ENCODE measurements at regions of chr11 and their contacts with region 1.

Region 1: GRCh38 chr11:7442588-7443215 is 42.6 kb upstream of the OLFML1 start:
- DNase-seq: peak; percentile 63
- H3K4me3 ChIP-seq: no peak overlapping the region
- H3K27ac ChIP-seq: no peak overlapping the region
- H3K4me1 ChIP-seq: no peaks in the 10 kb centered on the region
- H3K27me3 ChIP-seq: peaks cover 2 to 11% of the 10 kb centered on the region in 2 experiments
- CTCF ChIP-seq: peak; percentile 78 to 80
- POLR2A ChIP-seq: no peak

Region 2: DNA sequence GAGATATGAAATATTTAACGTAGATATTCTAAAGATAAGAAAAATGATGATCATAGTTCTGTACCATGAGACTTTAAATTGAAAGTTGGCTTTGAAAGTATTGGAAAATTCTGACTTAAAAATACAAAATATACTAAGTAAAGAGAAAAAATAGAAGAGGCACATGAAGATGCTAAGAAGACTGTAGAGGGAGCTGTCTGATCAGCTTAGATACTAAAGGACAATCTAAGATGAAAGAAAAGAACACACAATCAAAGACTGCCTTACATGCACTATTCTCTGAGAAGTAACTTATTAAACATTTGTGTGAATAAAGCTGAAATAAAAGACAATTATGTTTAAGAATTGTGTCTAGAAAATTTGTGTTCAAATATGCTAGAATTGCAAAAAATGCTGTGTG is 298.8 kb before region 1 on chr11:
- CTCF ChIA-PET with region 1: interaction called, 15 read pairs
- POLR2A ChIA-PET with region 1: no interaction called
- dilution Hi-C with region 1: no loop called
- intact Hi-C with region 1: loop called (anchors 1 kb)
- DNase-seq: peak; percentile 22
- H3K4me3 ChIP-seq: no peak overlapping the region
- H3K27ac ChIP-seq: no peak overlapping the region
- H3K4me1 ChIP-seq: no peaks in the 10 kb centered on the region
- H3K27me3 ChIP-seq: no peaks in the 10 kb centered on the region
- CTCF ChIP-seq: peak in 1 of 2 donors; percentile 14
- POLR2A ChIP-seq: no peak

Region 3: DNA sequence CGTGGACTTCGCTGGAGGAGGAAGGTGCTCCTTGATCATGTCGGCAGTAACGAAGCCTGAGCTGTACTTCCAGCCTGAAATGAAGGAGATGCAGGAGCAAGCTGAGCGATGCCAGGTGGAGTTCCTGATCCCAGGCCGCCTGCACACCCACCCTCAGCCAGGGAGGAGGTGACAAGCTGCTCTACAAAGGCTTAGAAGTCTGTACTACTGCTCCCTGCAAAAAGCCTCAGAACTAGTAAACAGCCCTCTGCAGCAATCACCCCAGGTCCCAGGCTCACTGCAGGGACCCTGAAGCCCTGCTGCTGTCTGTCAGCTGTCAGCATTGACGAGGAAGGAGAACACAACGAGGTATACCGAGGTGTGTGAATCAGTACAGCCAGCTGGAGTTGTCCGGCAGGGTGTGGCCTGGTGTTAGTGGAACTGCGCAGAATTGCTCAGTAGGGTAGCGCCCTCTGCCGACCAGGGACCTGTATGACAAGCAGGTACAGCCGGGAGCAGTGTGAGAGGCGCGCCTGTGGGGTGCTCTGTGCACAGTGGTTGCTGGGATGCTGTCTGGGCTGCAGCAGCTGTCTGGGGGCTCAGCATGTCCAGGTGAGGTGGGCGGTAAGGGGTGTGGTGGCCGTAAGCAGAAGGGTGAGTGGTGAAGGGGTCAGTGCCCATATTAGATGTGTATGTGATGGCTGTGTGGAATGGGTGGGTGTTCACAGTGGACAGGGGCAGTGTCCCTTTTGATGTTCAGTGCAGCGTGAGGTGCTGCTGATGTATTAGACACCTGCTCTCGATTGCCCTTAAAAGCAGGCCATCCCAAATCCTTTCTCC is 223.0 kb after region 1 on chr11:
- CTCF ChIA-PET with region 1: interaction called, 17 read pairs
- POLR2A ChIA-PET with region 1: no interaction called
- dilution Hi-C with region 1: no loop called
- intact Hi-C with region 1: loop called (anchors 1 kb)
- DNase-seq: peak; percentile 69
- H3K4me3 ChIP-seq: no peak overlapping the region
- H3K27ac ChIP-seq: no peak overlapping the region
- H3K4me1 ChIP-seq: no peaks in the 10 kb centered on the region
- H3K27me3 ChIP-seq: no peaks in the 10 kb centered on the region
- CTCF ChIP-seq: peak; percentile 79 to 94
- POLR2A ChIP-seq: no peak

Region 4: GRCh38 chr11:7688238-7688826 is 245.6 kb after region 1 on chr11:
- CTCF ChIA-PET with region 1: interaction called, 4 read pairs
- POLR2A ChIA-PET with region 1: no interaction called
- dilution Hi-C with region 1: no loop called
- intact Hi-C with region 1: loop called (anchors 10 kb)
- DNase-seq: peak; percentile 36
- H3K4me3 ChIP-seq: no peak overlapping the region
- H3K27ac ChIP-seq: no peak overlapping the region
- H3K4me1 ChIP-seq: no peaks in the 10 kb centered on the region
- H3K27me3 ChIP-seq: peaks cover 46 to 50% of the 10 kb centered on the region in 2 experiments
- CTCF ChIP-seq: peak; percentile 72 to 77
- POLR2A ChIP-seq: no peak

Region 5: DNA sequence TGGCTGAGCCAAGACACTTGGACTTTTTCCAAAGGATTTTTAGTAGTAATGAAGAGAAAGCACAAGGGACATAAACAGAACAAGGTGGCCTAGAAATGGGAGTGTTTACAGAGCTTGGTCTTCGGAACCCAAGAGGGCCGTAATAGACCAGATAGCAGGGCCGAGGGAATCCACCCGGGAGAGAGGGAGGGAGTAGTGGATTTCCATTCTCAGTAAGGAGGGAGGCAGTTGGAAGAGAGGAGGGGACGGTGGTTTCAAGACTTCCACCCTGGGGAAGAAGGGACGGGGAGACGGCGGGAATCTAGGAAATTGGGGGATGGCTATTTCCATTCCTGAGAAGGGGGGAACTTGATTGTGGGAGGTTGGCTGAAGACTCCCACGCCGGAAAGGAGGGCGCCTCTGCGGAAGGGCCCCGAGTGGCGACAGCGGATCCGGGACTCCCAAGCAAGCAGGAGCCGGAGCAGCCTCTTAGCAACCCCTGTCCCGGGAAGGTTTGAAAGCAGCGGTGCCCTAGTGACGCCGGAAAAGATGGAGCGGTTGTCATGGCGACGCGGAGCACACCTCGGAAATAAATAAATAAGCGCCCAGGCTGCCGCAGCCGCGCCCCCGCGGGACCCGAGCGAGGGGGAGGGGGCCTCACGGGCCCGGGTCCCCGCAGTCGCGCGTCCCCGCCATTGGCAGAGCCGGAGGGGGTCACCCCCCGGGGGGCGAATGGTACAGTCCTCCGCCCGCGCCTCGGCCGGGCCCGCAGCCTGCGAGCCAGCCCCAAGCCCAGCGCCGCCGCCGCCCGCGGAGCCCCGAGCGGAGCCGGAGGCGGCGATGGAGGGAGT is 576.0 kb after region 1 on chr11:
- CTCF ChIA-PET with region 1: no interaction called
- POLR2A ChIA-PET with region 1: no interaction called
- dilution Hi-C with region 1: no loop called
- intact Hi-C with region 1: no loop called
- DNase-seq: peak; percentile 30
- H3K4me3 ChIP-seq: peak overlapping the region; percentile 25 to 39 (median 36)
- H3K27ac ChIP-seq: no peak overlapping the region
- H3K4me1 ChIP-seq: peaks cover 5% of the 10 kb centered on the region
- H3K27me3 ChIP-seq: peaks cover 37 to 43% of the 10 kb centered on the region in 2 experiments
- CTCF ChIP-seq: no peak
- POLR2A ChIP-seq: no peak

Measured in endothelial cell of umbilical vein (primary cell).